Activated B cell treated with CpG ODN at 0.5 μM for 24 hours (primary cell): ENCODE measurements at regions of chr1 and their contacts with region 1.

Region 1: GRCh38 chr1:13667691-13668090 is 32.3 kb upstream of the PRDM2 start:
- DNase-seq: no peak
- ATAC-seq: peak; percentile 75
- H3K4me3 Mint-ChIP-seq: peak overlapping the region; percentile 78
- H3K27ac Mint-ChIP-seq: peak overlapping the region; percentile 95
- H3K4me1 Mint-ChIP-seq: peaks cover 48% of the 10 kb centered on the region
- H3K27me3 Mint-ChIP-seq: no peaks in the 10 kb centered on the region
- CTCF ChIP-seq: no peak

Region 2: GRCh38 chr1:12464598-12465056 is 1203.1 kb before region 1 on chr1:
- CTCF ChIA-PET with region 1: no interaction called
- POLR2A ChIA-PET with region 1: no interaction called
- intact Hi-C with region 1: no loop called
- DNase-seq: no peak
- ATAC-seq: no peak
- H3K4me3 Mint-ChIP-seq: no peak overlapping the region
- H3K27ac Mint-ChIP-seq: no peak overlapping the region
- H3K4me1 Mint-ChIP-seq: peaks cover 4% of the 10 kb centered on the region
- H3K27me3 Mint-ChIP-seq: no peaks in the 10 kb centered on the region
- CTCF ChIP-seq: no peak

Region 3: GRCh38 chr1:13714851-13715250 is 47.2 kb after region 1 on chr1:
- CTCF ChIA-PET with region 1: interaction called, 4 read pairs
- POLR2A ChIA-PET with region 1: interaction called, 17 read pairs
- intact Hi-C with region 1: no loop called
- DNase-seq: no peak
- ATAC-seq: no peak
- H3K4me3 Mint-ChIP-seq: no peak overlapping the region
- H3K27ac Mint-ChIP-seq: peak overlapping the region; percentile 65
- H3K4me1 Mint-ChIP-seq: peaks cover 78% of the 10 kb centered on the region
- H3K27me3 Mint-ChIP-seq: no peaks in the 10 kb centered on the region
- CTCF ChIP-seq: no peak